Cardiac septum (tissue), 1 donor: ENCODE measurements at regions of chr7 and their contacts with region 1.

Region 1: GRCh38 chr7:116236020-116236630 is 25.8 kb downstream of the TES start:
- DNase-seq: no peak

Region 2: DNA sequence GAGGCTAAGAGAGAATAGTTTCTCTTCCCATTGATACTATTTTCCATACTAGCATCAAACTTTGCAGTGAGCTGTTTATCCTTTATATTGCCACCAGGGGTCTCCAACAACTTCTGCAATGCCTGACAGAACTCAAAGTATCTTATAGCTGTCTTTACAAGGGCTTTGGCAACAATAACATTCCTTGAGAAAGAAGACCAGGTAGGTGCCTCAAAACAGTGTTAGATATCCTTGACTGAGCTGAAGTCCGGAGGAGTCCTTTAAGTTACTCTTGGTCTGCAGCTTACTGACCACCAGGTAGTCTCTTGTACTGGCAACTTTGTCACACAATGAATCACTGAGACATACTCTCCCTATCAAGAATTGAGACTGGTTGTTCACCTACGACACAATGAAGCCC is 55.8 kb before region 1 on chr7:
- intact Hi-C with region 1: loop called (anchors 2 kb)
- DNase-seq: no peak

Region 3: GRCh38 chr7:116211006-116211912 is 24.9 kb before region 1 on chr7:
- intact Hi-C with region 1: loop called (anchors 2 kb)
- DNase-seq: peak; percentile 87